ENCODE measurements at regions of chr1 and their contacts with region 1.

Region 1: GRCh38 chr1:25487628-25488027 is 55.8 kb upstream of the LDLRAP1 start:
- DNase-seq: peak; percentile 31
- CTCF ChIP-seq: peak; percentile 46

Region 2: DNA sequence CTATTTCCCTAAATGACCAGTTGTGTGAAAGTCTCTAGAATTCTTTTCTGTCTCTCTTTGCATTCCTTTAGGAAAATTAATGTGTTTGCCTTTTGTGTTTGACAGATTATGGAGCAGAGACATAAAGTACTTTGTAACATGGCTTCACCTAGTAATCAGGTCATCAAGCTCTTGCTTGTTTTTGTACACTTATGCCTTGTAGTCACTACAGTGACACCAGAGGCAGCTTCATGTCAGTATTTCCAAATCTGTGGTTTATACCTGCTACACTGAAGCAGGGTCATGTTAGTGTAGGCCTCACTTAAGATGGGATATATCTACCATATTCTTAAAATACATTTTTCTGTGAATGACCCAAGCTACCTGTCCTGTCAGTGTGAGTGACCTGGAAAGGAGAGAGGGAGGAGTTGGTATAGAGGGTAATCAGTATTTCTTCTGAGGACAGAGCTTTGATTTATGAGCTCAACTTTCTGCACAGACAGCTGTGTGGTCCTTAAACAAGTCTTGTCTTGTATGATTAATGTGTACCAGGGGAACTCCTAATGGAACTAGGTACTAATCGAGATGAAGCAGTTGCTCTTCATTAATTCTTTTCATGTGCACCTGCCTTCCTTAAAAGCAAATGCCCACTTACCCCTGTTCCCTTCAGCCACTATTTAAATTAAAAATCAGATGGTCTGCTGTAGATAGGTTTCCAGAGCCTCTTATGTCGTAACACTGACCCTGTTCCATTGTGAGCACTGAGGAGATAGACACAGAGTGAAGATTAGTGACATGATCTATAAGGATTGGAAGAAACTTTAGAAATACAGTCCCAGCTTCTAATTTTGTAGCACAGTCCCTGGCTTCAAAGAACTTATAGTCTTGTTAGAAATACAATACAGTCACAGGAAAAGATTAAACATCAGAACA is 11.2 kb before region 1 on chr1:
- CTCF ChIA-PET with region 1: interaction called, 23 read pairs
- POLR2A ChIA-PET with region 1: no interaction called
- DNase-seq: no peak
- CTCF ChIP-seq: no peak

Region 3: DNA sequence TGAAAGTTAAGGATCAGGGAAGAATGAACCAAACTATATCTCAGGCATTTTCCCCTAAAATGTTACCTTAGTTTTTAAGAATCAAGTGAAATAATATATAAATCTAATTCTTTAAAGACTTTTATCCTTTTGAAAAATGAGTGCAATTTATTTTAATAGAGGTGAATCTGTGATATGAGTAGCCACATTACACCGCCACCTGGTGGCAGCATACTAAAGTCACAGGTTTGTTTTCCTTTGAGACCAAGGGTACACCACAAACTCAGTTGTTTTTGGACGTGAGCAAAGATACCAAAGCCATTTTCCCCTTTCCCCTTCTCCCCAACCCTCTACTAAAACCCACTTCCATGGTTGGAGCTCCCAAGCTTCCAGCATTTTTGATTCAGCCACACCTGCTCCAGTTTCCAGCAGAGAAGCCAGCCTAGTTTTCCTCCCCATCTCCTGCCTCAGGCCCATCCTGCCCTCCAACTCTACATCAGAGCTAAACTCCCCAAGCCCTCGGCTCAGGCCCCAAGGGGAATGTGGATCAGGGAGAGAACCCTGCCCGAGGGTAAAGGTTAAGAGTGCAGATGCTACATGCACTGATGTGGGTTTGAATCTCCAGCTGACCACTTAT is 32.9 kb after region 1 on chr1:
- CTCF ChIA-PET with region 1: interaction called, 10 read pairs
- POLR2A ChIA-PET with region 1: no interaction called
- DNase-seq: peak; percentile 72
- CTCF ChIP-seq: peak; percentile 75

Measured in GM10248 (cell line).